ENCODE measurements at regions of chr4 and their contacts with region 1.

Region 1: DNA sequence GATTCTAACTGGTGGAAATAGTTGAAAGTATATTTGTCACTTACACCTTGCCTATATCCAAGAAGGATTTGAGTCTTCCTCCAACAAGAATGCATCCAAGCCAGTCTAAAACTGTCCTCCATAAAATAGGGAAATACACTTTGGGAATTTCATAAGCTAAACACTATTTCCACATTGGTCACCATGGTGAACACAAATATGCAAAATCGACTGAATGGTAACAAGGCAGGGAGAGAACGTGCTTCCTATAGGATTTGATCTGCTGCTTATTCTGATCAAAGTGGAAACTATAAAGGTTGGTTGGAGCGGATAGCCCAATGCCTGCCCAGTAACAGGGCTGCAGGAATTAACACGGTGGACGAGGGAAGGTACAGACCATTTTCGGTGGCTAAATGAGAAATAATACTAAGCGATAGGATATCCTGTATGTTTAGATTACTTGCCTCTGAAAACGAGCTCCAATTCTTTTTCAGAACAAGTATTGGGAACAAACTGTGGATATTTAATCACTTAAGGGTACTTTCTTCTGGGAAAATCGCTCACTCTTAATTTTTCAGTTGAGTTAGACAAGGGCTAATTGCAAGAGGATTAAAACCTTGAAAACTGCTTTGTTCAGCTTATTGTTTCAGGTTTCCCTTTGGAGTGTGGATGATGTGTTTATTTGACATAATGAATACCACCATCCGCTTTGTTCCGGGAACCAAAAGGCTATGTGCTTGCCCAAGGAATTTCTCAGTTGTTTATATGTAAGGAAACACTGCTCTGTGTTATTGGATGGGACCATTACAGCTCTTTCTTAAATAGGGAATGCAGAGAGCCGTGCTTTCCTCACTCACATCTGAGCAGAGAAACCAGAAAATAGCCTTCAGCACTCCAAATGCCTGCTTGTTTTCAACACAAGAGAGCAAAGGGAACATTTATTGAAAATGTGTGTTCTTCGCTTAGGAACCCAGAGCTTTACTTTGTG is 194.4 kb downstream of the CBR4 start:
- DNase-seq: no peak
- H3K4me3 ChIP-seq: no peak overlapping the region
- H3K27ac ChIP-seq: peak overlapping the region; percentile 58
- H3K4me1 ChIP-seq: peaks cover 39% of the 10 kb centered on the region
- H3K27me3 ChIP-seq: no peaks in the 10 kb centered on the region
- CTCF ChIP-seq: no peak

Region 2: DNA sequence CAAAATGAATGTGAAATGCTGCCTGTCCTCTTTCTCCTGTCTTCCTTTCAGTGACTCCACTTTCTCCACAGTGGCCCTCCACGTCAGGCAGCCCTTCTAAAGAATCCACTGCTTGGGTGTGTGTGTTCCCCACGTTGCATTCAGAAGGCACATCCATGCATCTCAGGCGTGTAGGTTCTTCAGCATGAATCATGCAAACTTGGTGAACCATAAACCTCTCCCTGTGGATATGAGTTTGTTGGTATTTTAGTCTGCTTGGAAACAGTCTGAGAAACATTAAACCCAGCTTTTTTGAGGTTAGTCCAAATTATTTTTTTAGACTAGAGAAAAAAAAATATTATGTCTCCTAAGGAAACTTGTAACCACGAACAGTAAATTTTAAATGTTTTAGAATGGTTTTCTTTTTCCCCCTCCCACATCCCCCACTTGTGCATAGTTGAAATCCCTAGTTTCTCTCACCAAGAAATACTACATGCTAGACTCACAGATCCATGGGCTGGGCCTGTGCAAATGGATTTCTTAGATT is 57.2 kb before region 1 on chr4:
- CTCF ChIA-PET with region 1: no interaction called
- dilution Hi-C with region 1: no loop called
- in situ Hi-C with region 1: no loop called
- intact Hi-C with region 1: loop called (anchors 2 kb)
- DNase-seq: peak; percentile 82
- H3K4me3 ChIP-seq: no peak overlapping the region
- H3K27ac ChIP-seq: peak overlapping the region; percentile 92
- H3K4me1 ChIP-seq: peaks cover 51% of the 10 kb centered on the region
- H3K27me3 ChIP-seq: no peaks in the 10 kb centered on the region
- CTCF ChIP-seq: no peak

Region 3: DNA sequence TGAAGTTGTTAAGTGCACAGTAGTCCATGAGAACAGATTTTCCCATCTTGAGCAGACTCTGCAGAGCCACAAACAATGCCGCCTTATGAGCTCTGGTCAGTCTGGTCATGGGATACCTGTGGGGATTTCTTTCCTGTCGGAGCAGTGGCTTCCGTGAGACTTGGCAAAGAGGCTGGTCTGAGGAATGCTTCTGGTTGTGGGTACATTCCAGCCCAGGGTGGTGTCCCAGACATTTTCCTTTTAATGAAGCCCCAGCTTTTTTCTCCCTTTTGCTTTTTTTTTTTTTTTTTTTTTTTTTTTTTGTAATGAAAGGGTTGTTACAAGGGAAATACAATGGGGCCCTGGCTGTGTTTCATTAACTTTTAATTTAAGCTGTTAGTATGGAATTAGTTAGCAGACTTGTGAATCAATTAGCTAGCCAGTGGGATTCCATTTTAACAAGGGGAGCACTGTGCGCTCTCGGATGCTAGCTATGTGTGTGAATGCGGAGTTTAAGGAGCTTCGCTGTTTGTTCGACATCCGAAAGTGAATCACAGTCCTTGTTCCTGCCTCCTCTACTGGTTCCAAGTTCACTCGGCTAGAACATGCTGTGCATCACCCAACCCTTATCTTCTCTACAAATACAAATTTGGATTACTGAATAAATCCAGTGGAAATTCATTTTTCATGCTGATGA is 30.7 kb before region 1 on chr4:
- CTCF ChIA-PET with region 1: no interaction called
- dilution Hi-C with region 1: no loop called
- in situ Hi-C with region 1: no loop called
- intact Hi-C with region 1: loop called (anchors 2 kb)
- DNase-seq: peak; percentile 95
- H3K4me3 ChIP-seq: peak overlapping the region; percentile 8 to 17 (median 12)
- H3K27ac ChIP-seq: peak overlapping the region; percentile 91
- H3K4me1 ChIP-seq: peaks cover 25% of the 10 kb centered on the region
- H3K27me3 ChIP-seq: no peaks in the 10 kb centered on the region
- CTCF ChIP-seq: no peak

Region 4: DNA sequence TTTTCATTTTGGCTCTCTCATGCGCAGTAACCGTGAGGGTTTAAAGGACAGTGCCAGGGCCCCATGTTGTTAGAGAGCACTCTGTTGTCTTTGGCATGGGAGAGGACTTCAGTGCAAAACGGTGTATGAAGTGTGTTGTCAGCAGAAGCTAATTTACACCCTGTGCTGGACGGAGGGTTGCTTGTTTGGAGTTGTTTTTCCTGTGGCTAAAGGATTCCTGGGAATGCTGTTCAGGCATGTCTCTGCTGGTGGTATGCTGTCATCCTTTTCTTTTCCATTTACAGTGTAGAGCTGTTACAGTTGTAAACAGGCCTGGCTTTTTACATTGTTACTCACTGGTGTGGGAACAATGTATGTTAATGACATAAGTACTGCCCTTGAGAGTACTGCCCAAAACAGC is 11.9 kb before region 1 on chr4:
- CTCF ChIA-PET with region 1: no interaction called
- dilution Hi-C with region 1: no loop called
- in situ Hi-C with region 1: no loop called
- intact Hi-C with region 1: loop called (anchors 1 kb)
- DNase-seq: peak; percentile 90
- H3K4me3 ChIP-seq: no peak overlapping the region
- H3K27ac ChIP-seq: peak overlapping the region; percentile 89
- H3K4me1 ChIP-seq: peaks cover 19% of the 10 kb centered on the region
- H3K27me3 ChIP-seq: no peaks in the 10 kb centered on the region
- CTCF ChIP-seq: no peak

Region 5: DNA sequence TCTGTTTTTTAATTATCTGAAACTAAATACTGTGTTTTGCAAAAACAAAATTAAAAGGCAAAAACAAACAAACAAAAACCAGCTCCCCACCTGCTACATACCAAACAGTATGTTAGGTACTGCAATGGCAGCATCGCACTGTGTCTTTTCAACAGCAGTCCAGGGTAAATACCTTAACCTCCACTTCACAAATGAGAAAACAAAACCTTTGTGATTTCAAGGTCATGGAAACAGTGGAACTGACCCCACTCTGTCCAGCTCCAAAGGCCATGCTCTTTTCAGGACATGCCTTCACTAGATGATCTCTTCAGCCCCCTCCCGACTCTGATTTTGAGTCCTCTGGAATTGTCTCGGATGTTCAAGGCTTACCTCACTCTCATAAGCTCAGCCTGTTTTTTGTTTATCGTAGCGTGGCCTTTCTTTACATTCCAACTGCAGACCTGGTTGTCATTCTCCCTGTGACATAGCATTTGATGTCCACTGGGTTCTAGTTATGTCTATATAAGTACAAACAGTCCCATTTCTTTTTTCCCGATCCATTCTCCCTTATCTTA is 11.0 kb after region 1 on chr4:
- CTCF ChIA-PET with region 1: interaction called, 3 read pairs
- dilution Hi-C with region 1: no loop called
- in situ Hi-C with region 1: no loop called
- intact Hi-C with region 1: loop called (anchors 1 kb)
- DNase-seq: no peak
- H3K4me3 ChIP-seq: no peak overlapping the region
- H3K27ac ChIP-seq: no peak overlapping the region
- H3K4me1 ChIP-seq: peaks cover 11% of the 10 kb centered on the region
- H3K27me3 ChIP-seq: no peaks in the 10 kb centered on the region
- CTCF ChIP-seq: no peak

Measured in mammary epithelial cell (primary cell).